ENCODE measurements at regions of chr14 and their contacts with region 1.

Region 1: DNA sequence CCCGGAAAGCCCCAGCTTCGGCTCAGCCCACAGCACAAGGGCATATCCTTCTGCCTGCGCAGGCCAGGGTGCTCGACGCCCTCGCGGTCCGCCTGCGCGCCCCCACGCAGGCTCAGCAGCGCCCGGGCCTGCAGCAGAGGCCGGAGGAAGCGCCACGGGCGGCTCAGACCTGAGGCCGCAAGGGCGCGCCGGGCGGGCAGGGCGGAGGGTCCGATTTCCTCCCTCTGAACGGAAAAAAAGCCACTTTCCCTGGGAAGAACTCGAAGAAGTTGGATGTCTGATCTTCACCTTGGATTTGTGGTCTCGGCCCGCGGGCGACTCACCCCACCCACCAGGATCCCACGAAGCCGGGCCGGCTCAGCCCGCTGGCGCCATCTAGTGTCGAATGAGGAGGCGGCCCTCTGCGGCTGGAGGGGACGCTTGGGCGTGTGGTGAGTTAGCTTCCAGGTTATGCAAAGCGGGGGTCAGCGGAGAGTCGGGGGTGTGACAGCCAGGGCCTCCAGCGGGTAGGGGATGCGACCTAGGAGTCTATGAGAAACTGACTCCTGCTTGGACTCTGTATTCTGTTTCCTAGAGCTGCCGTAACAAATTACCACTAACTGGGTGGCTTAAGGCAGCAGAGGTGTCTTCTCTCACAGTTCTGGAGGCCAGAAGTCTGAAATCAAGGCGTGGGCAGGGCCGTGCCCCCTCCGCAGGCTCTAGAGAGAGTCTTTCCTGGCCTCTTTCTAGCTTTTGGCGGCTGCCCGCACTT is 40.0 kb upstream of the SRSF5 start:
- DNase-seq: peak; percentile 88
- CTCF ChIP-seq: peak; percentile 99

Region 2: DNA sequence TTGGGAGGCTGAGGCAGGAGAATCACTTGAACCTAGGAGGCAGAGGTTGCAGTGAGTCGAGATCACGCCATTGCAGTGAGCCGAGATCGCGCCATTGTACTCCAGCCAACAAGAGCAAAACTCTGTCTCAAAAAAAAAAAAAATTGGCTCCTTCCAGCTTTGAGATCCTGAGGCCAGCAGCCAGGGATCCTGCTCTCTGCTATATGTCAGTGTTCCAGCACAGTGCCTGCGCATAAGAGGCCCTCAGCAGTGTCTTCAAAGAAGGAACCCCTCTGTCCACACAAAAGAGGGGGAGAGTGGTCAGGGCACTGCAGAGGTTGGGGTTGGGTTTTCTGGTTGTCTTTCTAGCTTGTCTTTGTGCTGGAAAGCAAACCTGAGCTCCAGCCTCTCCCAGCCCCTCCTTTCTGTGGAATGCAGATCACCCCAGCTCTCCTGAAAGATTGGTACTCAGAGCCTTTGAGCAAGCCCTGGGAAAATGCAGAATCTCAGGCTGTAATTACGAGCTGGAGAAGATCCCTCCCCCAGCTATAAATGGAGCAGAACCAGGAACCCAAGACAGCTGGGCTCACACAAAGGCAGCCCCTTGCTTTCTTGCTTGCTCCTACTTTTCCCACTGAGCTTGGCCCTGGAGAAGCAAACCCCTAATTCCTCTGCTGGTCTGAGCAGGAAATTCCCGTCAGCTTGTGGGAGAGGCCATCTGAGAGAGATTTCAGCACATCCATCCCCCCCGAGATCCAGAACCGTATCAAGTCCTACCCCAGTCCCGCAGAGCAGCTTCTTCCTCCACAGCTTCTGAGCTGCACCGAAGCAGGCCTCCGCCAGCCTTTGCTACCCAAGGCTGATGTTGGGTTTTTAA is 1139.8 kb before region 1 on chr14:
- CTCF ChIA-PET with region 1: no interaction called
- POLR2A ChIA-PET with region 1: no interaction called
- DNase-seq: no peak
- CTCF ChIP-seq: no peak

Region 3: GRCh38 chr14:69580009-69580577 is 146.8 kb before region 1 on chr14:
- CTCF ChIA-PET with region 1: interaction called, 72 read pairs
- POLR2A ChIA-PET with region 1: no interaction called
- DNase-seq: no peak
- CTCF ChIP-seq: peak; percentile 43

Region 4: DNA sequence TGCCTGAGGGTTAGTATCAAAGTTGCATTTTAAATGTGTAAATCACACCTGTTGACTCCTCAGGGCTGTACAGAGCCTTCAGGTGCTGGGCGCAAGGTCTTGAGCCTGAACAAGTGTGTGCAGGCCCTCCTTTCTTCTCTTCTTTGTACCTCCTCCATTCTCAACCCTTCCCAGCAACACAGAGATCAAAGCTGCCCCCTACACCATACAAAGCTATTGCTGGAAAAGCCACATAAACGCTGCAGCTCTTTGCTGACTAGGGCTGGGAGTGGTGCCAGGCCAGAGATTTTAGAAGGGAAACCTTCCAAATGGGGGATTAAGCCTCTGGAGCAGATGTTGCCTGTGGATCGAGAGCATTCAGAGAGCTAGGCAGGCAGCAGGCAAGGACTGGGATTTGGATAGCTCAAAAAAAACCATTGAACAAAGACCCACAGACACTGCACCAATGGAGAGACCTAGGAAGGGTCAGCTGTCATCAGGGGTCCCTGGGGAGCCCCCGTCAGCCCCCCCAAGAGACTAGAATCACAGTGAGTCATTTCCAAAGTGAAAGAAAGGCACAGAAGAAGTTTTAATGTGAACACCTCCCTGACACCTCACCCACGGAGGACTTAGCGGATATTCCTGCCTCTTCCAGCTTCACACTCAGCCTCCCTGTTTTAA is 133.8 kb before region 1 on chr14:
- CTCF ChIA-PET with region 1: interaction called, 23 read pairs
- POLR2A ChIA-PET with region 1: no interaction called
- DNase-seq: no peak
- CTCF ChIP-seq: no peak

Region 5: DNA sequence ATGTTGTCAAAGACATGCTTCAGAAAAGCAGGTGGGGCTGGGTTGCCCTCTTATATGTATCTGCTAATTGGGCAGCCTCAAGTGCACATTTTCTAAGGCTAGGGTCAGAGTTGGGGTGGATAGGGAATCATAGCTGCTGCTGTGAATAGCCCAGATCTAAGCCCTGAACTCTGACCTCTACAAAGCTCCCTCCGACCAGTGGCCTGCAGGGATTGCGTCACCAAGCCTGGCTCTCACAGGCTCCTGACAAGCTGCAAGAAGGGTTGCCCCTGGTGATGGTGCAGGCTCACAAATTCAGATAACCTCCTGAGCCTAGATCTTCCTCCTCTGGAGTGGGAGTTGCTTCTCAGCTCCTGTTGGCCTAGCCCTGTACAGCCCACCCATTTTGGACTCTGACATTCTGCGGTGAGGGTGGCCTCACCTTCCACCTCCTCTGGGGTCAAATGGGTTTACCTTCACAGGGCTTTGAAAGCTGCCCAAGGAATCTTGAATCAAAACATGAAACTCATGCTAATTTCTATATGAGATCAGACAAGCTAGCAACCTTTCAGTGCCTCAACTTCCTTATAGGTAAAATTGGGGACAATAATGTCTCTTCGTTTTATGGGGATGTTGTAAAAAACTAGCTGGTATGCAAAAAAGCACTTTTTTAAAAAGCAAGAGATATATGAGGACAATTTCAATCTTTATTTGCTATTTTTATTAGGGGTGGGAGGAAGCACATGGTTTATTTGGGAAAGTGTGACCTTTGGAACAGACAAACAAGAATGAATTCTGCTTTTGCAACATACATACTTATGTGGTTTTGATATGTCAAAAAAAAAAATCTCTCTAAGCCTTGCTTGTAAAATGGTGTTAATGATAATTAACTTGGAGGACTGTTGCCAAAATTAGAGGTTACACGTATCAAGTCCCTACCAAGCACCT is 120.4 kb before region 1 on chr14:
- CTCF ChIA-PET with region 1: interaction called, 34 read pairs
- POLR2A ChIA-PET with region 1: no interaction called
- DNase-seq: no peak
- CTCF ChIP-seq: no peak

Region 6: DNA sequence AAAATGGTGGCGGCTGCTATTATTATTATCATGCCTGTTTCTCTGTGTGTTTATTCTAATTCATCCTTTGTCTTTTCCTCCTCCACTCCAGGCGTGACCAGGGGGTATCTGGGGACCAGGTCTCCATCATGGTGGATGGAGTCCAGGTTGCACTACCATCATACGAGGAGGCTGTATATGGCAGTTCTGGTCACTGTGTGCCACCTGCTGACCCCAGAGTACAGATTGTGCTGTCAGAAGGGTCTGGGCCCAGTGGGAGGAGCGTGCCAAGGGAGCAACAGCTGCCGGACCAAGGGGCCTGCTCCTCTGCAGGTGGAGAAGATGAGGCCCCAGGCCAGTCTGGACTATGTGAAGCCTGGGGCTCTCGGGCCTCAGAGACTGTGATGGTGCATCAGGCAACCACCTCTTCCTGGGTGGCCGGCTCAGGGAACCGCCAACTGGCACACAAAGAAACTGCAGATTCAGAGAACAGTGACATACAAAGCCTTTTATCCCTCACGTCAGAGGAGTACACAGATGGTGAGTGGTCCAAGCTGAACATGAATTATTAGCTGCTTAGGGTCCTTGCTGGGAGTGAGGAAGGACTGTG is 18.3 kb before region 1 on chr14:
- CTCF ChIA-PET with region 1: interaction called, 12 read pairs
- POLR2A ChIA-PET with region 1: no interaction called
- DNase-seq: no peak
- CTCF ChIP-seq: no peak

Region 7: DNA sequence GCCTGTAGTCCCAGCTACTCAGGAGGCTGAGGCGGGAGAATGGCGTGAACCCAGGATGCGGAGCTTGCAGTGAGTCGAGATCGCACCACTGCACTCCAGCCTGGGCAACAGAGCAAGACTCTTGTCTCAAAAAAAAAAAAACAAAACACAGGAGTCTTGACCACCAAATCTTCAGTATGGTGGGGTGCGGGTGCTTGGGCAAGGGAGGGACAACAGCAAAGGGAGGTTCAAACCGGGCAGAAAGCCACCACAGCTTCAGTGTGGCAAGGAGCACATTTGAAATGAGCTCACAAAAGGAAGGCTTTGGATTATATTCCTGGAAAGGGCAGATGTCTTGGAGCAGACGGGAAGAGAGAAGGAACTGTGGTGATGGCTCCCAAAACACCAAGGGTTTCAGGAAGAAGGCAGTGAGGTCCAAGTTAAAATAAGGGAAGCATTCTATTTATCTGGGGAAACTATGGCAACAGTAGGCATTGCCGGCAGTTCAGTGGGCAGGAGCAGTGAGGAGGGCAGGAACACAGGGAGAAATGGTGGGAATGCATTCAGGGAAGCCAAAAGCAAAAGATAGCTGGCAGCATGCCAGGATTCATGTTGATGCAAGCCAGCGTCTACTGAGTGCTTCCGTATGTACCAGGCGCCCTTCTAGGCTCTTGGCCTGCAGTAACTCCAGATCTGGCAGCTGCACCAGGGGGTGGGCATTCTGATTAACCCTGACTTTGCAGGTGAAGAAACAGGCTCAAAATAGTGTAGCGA is 11.0 kb before region 1 on chr14:
- CTCF ChIA-PET with region 1: interaction called, 12 read pairs
- POLR2A ChIA-PET with region 1: no interaction called
- DNase-seq: no peak
- CTCF ChIP-seq: no peak

Region 8: GRCh38 chr14:69749956-69750355 is 23.0 kb after region 1 on chr14:
- CTCF ChIA-PET with region 1: interaction called, 18 read pairs
- POLR2A ChIA-PET with region 1: no interaction called
- DNase-seq: no peak
- CTCF ChIP-seq: no peak

Region 9: DNA sequence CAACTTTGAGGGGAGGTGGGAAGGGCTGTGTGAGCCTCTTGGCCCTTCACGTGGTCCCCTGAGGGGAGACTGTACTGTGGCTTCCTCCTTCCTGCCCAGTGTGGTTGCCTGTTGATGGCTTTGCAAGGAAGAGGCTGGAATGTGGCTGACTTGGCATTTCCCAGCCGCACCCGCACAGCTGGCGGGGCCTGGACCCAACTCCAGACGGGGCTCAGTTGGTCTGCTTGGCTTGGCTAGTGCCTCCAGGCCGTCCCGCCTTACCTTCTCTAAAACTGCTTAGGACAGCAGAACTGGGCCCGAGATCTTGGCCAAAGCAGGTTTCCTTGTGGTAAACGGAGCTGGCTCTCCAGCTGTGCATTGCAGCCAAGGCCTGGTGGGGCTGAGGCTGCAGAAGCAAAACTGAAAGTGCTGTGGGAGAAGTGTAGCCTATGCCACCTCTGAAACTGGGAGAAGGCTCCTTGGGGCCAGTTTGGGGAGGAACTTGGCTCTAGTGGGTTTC is 291.8 kb after region 1 on chr14:
- CTCF ChIA-PET with region 1: no interaction called
- POLR2A ChIA-PET with region 1: no interaction called
- DNase-seq: peak; percentile 36
- CTCF ChIP-seq: no peak